ENCODE measurements at regions of chr17 and their contacts with region 1.

Region 1: GRCh38 chr17:42120770-42121769 is at the start of gene KAT2A:
- DNase-seq: peak; percentile 89 to 99
- ATAC-seq: peak; percentile 78 to 93
- H3K4me3 ChIP-seq: peak within 1 kb of the TSS; percentile 93
- H3K27ac ChIP-seq: peak within 1 kb of the TSS; percentile 94 to 98
- H3K4me1 ChIP-seq: peaks cover 16% of the 10 kb centered on the region
- CTCF ChIP-seq: no peak
- EP300 ChIP-seq: no peak
- POLR2A ChIP-seq: peak; percentile 93
- RAD21 ChIP-seq: no peak
- polyA plus RNA-seq, gene KAT2A: 42.2 and 57.4 TPM in 2 replicates

Region 2: DNA sequence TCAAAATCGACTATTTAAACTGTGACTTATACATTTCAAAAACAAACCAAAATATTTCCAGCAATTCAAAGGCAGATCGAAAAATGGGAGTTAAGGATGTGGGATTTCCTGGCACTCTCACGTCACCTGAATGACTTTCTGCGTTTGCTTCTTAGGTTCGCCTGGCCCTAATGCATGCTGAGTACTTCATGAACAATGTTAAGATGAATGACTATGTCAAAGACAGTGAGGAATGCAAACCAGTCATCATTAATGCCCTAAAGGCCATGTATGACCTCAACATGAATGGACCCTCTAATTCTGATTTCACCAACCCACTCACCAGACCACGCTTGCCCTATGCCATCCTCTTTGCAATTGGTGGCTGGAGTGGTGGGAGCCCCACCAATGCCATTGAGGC is 276.1 kb before region 1 on chr17:
- CTCF ChIA-PET with region 1: no interaction called
- POLR2A ChIA-PET with region 1: no interaction called
- DNase-seq: no peak
- ATAC-seq: 0 out of 6 replicates have a peak, but pooled peaks of 1 of the 2 experiments have one; percentile 10
- H3K4me3 ChIP-seq: no peak overlapping the region
- H3K27ac ChIP-seq: no peak overlapping the region
- H3K4me1 ChIP-seq: peaks cover 9% of the 10 kb centered on the region; the same call in 2 of the 3 replicates
- CTCF ChIP-seq: no peak
- EP300 ChIP-seq: no peak
- POLR2A ChIP-seq: no peak
- RAD21 ChIP-seq: no peak

Region 3: GRCh38 chr17:41966463-41967140 is 154.5 kb before region 1 on chr17 and contains the start of gene CNP:
- CTCF ChIA-PET with region 1: interaction called, 231 read pairs
- POLR2A ChIA-PET with region 1: interaction called, 10 read pairs
- DNase-seq: peak; percentile 92 to 95
- ATAC-seq: peak; percentile 69 to 85
- H3K4me3 ChIP-seq: peak within 1 kb of the TSS; percentile 79
- H3K27ac ChIP-seq: peak within 1 kb of the TSS; percentile 75 to 96
- H3K4me1 ChIP-seq: peaks cover 12% of the 10 kb centered on the region; the same call in 2 of the 3 replicates
- CTCF ChIP-seq: no peak
- EP300 ChIP-seq: no peak
- POLR2A ChIP-seq: peak; percentile 84
- RAD21 ChIP-seq: no peak
- polyA plus RNA-seq, gene CNP: 38.6 and 49.8 TPM in 2 replicates

Region 4: GRCh38 chr17:42039794-42040763 is 81.0 kb before region 1 on chr17:
- CTCF ChIA-PET with region 1: interaction called, 11 read pairs
- POLR2A ChIA-PET with region 1: no interaction called
- DNase-seq: no peak
- ATAC-seq: peak in 1 of 2 experiments; percentile 12; a peak in 2 of 6 replicates
- H3K4me3 ChIP-seq: no peak overlapping the region
- H3K27ac ChIP-seq: no peak overlapping the region
- H3K4me1 ChIP-seq: no peaks in the 10 kb centered on the region
- CTCF ChIP-seq: no peak
- EP300 ChIP-seq: no peak
- POLR2A ChIP-seq: no peak
- RAD21 ChIP-seq: no peak

Region 5: GRCh38 chr17:42067351-42068091 is 53.5 kb before region 1 on chr17:
- CTCF ChIA-PET with region 1: interaction called, 454 read pairs
- POLR2A ChIA-PET with region 1: interaction called, 3 read pairs
- DNase-seq: peak; percentile 68 to 79
- ATAC-seq: peak; percentile 62 to 84
- H3K4me3 ChIP-seq: no peak overlapping the region
- H3K27ac ChIP-seq: no peak overlapping the region
- H3K4me1 ChIP-seq: peaks cover 4% of the 10 kb centered on the region; the same call in 2 of the 3 replicates
- CTCF ChIP-seq: peak; percentile 92
- EP300 ChIP-seq: no peak
- POLR2A ChIP-seq: no peak
- RAD21 ChIP-seq: peak; percentile 59 to 67

Region 6: GRCh38 chr17:42087736-42088705 is 33.0 kb before region 1 on chr17:
- CTCF ChIA-PET with region 1: interaction called, 41 read pairs
- POLR2A ChIA-PET with region 1: no interaction called
- DNase-seq: no peak
- ATAC-seq: peak; percentile 47 to 48; a peak in 5 of 6 replicates
- H3K4me3 ChIP-seq: no peak overlapping the region
- H3K27ac ChIP-seq: no peak overlapping the region
- H3K4me1 ChIP-seq: 0 out of 3 replicates have a peak, but pooled peaks cover 3% of the 10 kb centered on the region
- CTCF ChIP-seq: no peak
- EP300 ChIP-seq: no peak
- POLR2A ChIP-seq: no peak
- RAD21 ChIP-seq: no peak

Region 7: DNA sequence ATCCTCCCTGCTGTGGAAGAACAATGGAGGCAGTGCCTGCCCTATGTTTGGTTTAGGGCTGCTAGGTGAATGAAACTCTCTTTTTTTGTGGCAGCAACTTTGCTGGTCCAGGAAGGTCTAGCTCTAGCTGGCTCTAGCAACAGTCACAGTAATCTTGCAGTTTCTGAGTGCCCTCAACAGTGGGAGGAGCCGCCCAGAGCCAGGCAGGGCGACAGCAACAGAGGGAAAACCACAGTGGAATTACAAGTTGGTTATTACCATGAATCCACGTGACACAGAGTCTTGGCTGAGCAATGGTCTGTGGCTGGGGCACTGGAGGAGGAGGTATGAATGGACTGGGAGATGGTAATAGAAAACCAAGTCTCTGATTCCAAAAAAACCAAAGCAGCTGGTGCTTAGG is 11.9 kb after region 1 on chr17:
- CTCF ChIA-PET with region 1: interaction called, 84 read pairs
- POLR2A ChIA-PET with region 1: interaction called, 10 read pairs
- DNase-seq: no peak
- ATAC-seq: no peak
- H3K4me3 ChIP-seq: no peak overlapping the region
- H3K27ac ChIP-seq: no peak overlapping the region
- H3K4me1 ChIP-seq: peaks cover 37% of the 10 kb centered on the region
- CTCF ChIP-seq: no peak
- EP300 ChIP-seq: no peak
- POLR2A ChIP-seq: no peak
- RAD21 ChIP-seq: no peak

Region 8: DNA sequence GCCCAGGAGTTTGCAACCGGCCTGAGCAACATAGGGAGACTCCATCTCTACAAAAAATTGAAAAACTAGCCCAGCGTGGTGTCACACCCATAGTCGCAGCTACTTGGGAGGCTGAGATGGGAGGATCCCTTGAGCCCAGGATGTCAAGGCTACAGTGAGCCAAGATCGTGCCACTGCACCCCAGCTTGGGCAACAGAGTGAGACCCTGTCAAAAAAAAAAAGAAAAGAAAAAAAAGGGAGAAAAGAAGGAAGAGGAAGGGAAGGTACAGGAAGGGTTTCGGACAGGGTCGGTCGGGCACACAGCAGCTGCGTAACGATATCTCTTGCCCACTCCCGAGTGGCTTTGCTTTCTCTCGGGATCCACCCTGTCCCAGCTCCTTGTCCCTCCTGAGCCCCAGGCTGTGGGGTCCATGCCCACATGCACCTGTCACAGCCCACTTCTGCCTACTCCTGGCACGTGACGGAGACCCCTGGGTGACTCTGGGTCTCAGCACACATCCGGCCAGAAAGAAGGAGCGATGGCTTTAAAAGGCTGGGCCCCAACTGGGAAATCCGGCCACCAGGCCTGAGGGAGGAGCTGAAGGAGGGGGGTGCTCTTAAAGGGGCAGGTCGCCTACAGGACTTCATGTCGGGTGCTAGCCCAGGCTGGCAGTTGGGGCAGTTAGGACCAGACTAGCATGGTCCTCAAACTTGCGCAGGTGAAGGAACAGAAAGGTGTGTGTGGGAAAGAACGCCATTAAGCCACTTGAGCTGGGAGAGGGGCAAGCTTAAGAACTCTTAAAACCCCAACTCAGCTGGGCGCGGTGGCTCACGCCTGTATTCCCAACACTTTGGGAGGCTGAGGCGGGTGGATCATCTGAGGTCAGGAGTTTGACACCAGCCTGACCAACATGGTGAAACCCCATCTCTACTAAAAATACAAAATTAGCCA is 73.2 kb after region 1 on chr17 and contains the start of gene GHDC:
- CTCF ChIA-PET with region 1: interaction called, 14 read pairs
- POLR2A ChIA-PET with region 1: interaction called, 3 read pairs
- DNase-seq: peak; percentile 83 to 92
- ATAC-seq: peak; percentile 97
- H3K4me3 ChIP-seq: peak within 1 kb of the TSS; percentile 79
- H3K27ac ChIP-seq: peak within 1 kb of the TSS; percentile 91 to 94
- H3K4me1 ChIP-seq: peaks cover 8% of the 10 kb centered on the region; the same call in 2 of the 3 replicates
- CTCF ChIP-seq: no peak
- EP300 ChIP-seq: no peak
- POLR2A ChIP-seq: peak; percentile 56
- RAD21 ChIP-seq: no peak
- polyA plus RNA-seq, gene GHDC: 12.3 and 14.2 TPM in 2 replicates

Measured in A549 (cell line).